ENCODE measurements at regions of chr9 and their contacts with region 1.

Region 1: GRCh38 chr9:136400038-136400834 is at the start of gene SNAPC4:
- DNase-seq: peak; percentile 76 to 97
- H3K4me3 ChIP-seq: peak within 1 kb of the TSS; percentile 73 to 84 (median 79)
- H3K27ac ChIP-seq: peak within 1 kb of the TSS; percentile 29; the same call in 1 of the 2 replicates
- H3K4me1 ChIP-seq: peaks cover 0 to 10% (median 7%) of the 10 kb centered on the region in 4 experiments; a peak in 5 of 7 replicates
- H3K27me3 ChIP-seq: no peaks in the 10 kb centered on the region
- CTCF ChIP-seq: peak in 2 of 3 experiments; percentile 86 to 92; a peak in 3 of 4 replicates
- EP300 ChIP-seq: peak in 1 of 2 experiments; percentile 37; a peak in 1 of 3 replicates
- POLR2A ChIP-seq: peak in 1 of 2 experiments; percentile 86; a peak in 2 of 3 replicates
- RAD21 ChIP-seq: peak; percentile 57 to 77
- total RNA-seq, gene SNAPC4: 15.1 and 18.1 TPM in 2 replicates

Region 2: GRCh38 chr9:136372561-136373299 is 27.5 kb before region 1 on chr9:
- CTCF ChIA-PET with region 1: interaction called, 6 read pairs
- POLR2A ChIA-PET with region 1: interaction called, 72 read pairs
- DNase-seq: no peak
- H3K4me3 ChIP-seq: no peak overlapping the region
- H3K27ac ChIP-seq: no peak overlapping the region; the same call in 1 of the 2 replicates
- H3K4me1 ChIP-seq: no peaks in the 10 kb centered on the region
- H3K27me3 ChIP-seq: no peaks in the 10 kb centered on the region
- CTCF ChIP-seq: no peak
- EP300 ChIP-seq: no peak
- POLR2A ChIP-seq: no peak
- RAD21 ChIP-seq: 0 out of 4 replicates have a peak, but pooled peaks of 1 of the 2 experiments have one; percentile 1

Region 3: GRCh38 chr9:136410500-136411287 is 10.5 kb after region 1 on chr9 and contains the starts of genes ENTR1 and PMPCA:
- CTCF ChIA-PET with region 1: interaction called, 10 read pairs
- POLR2A ChIA-PET with region 1: interaction called, 123 read pairs
- DNase-seq: peak in 1 of 2 experiments; percentile 94
- H3K4me3 ChIP-seq: peak within 1 kb of the TSS; percentile 87 to 93 (median 92)
- H3K27ac ChIP-seq: peak within 1 kb of the TSS; percentile 75
- H3K4me1 ChIP-seq: peaks cover 0 to 3% (median 3%) of the 10 kb centered on the region in 4 experiments; a peak in 4 of 7 replicates
- H3K27me3 ChIP-seq: no peaks in the 10 kb centered on the region
- CTCF ChIP-seq: no peak
- EP300 ChIP-seq: no peak
- POLR2A ChIP-seq: peak; percentile 82 to 91
- RAD21 ChIP-seq: no peak
- total RNA-seq, gene ENTR1: 102 and 110 TPM in 2 replicates
- total RNA-seq, gene PMPCA: 88.2 and 89.2 TPM in 2 replicates

Region 4: DNA sequence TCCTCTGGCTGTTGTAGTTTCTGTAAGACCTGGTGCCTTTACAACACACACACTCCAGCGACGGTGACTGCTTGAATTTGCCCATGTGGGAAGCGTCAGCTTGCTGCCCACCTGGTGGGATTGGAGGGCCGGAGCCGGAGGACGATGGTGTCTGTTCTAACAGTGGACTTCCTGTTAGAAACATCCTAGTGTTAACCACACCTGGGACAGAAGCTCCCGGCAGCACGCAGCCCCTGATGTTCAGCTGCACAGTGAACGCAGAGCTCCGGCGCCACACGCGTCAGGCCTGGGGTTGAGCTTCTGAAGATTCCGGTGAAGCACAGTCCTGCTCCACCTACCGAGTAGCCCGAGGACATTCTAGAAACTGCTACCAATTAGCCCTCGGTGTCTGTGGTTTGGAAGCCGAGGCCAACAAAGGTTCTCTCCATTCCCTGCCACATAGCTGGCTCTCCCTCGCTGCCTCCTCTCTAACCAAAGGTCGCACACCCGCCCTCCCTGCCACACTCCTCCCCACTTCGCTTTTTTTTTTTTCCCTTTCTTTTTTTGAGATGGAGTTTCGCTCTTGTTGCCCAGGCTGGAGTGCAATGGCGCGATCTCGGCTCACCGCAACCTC is 24.6 kb after region 1 on chr9:
- CTCF ChIA-PET with region 1: interaction called, 6 read pairs
- POLR2A ChIA-PET with region 1: interaction called, 15 read pairs
- DNase-seq: no peak
- H3K4me3 ChIP-seq: no peak overlapping the region
- H3K27ac ChIP-seq: no peak overlapping the region
- H3K4me1 ChIP-seq: no peaks in the 10 kb centered on the region
- H3K27me3 ChIP-seq: no peaks in the 10 kb centered on the region
- CTCF ChIP-seq: no peak
- EP300 ChIP-seq: no peak
- POLR2A ChIP-seq: no peak
- RAD21 ChIP-seq: no peak

Measured in H1 (cell line).